H1 (cell line): ENCODE measurements at regions of chr7 and their contacts with region 1.

Region 1: DNA sequence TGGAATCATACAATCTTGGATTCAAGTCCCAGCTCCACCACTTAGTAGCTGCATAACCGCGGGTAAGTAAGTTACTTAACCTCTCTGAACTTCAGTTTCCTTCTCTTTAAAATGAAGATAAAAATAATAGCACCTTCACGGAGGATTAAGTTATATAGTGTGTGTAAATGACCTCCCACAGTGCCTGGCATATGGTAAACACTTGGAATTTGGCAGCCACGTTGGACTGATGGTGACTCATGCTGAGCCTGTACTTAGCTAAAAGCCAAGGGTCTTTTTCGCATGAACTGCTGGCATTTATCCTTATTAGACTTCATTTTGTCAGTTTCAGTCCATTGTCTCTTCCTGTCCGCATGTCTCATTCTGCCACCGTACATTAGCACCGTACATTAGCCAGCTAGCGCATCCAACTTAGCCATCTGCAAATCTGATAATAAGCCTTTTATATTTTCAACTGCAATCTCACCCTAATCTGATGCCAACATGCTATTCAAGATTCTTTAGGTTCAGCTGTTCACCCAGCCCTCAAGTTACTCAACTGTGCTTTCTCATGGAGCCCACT is 11.2 kb downstream of the SLC13A4 start:
- DNase-seq: no peak
- H3K4me3 ChIP-seq: no peak overlapping the region
- H3K27ac ChIP-seq: no peak overlapping the region
- H3K4me1 ChIP-seq: peaks cover 0 to 8% (median under 1%) of the 10 kb centered on the region in 4 experiments; a peak in 2 of 7 replicates
- H3K27me3 ChIP-seq: no peaks in the 10 kb centered on the region
- CTCF ChIP-seq: no peak
- EP300 ChIP-seq: no peak
- POLR2A ChIP-seq: no peak
- RAD21 ChIP-seq: no peak

Region 2: GRCh38 chr7:135616136-135616535 is 100.6 kb before region 1 on chr7:
- CTCF ChIA-PET with region 1: no interaction called
- POLR2A ChIA-PET with region 1: no interaction called
- DNase-seq: no peak
- H3K4me3 ChIP-seq: no peak overlapping the region
- H3K27ac ChIP-seq: no peak overlapping the region
- H3K4me1 ChIP-seq: no peaks in the 10 kb centered on the region
- H3K27me3 ChIP-seq: no peaks in the 10 kb centered on the region
- CTCF ChIP-seq: no peak
- EP300 ChIP-seq: no peak
- POLR2A ChIP-seq: no peak
- RAD21 ChIP-seq: no peak

Region 3: GRCh38 chr7:135650831-135651573 is 65.8 kb before region 1 on chr7:
- CTCF ChIA-PET with region 1: no interaction called
- POLR2A ChIA-PET with region 1: no interaction called
- DNase-seq: no peak
- H3K4me3 ChIP-seq: no peak overlapping the region
- H3K27ac ChIP-seq: no peak overlapping the region
- H3K4me1 ChIP-seq: peaks cover 0 to 2% (median under 1%) of the 10 kb centered on the region in 4 experiments; a peak in 2 of 7 replicates
- H3K27me3 ChIP-seq: no peaks in the 10 kb centered on the region
- CTCF ChIP-seq: no peak
- EP300 ChIP-seq: no peak
- POLR2A ChIP-seq: no peak
- RAD21 ChIP-seq: no peak

Region 4: DNA sequence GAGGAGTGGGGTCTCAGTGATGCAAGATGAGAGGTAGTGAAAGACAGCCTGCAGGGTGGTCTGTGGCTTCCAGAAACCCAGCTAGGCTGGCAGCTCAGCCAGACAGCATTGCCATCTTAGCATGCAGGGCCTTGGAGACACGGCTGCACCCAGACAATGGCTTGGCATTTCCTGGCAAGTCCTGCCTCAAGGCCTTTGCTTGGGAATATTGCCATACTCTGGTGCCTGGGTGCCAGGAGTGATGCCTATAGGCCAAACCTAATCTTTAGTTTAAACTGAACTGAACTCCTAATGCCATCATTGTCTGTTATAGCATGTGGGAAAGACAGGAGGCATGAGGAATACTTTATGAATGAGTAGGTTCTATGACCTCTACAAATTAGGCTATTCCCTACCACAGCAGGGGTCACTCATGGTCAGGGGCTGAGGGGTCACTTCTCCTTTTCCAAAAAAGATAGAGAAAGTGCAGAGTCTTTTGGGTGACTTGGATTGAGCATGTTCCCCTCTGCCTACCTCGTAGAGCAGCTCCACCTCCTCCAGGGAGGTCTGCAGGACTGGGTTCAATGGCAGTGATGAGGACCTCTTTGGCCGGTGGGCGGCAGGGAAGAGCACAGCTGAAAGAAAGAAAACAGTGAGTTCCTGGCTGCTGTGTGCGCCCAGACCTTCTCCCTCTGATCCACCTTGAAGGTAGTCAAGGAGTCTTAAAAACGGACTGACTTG is 20.0 kb after region 1 on chr7:
- CTCF ChIA-PET with region 1: interaction called, 30 read pairs
- POLR2A ChIA-PET with region 1: no interaction called
- DNase-seq: no peak
- H3K4me3 ChIP-seq: no peak overlapping the region
- H3K27ac ChIP-seq: no peak overlapping the region; the same call in 1 of the 2 replicates
- H3K4me1 ChIP-seq: no peaks in the 10 kb centered on the region
- H3K27me3 ChIP-seq: no peaks in the 10 kb centered on the region
- CTCF ChIP-seq: no peak
- EP300 ChIP-seq: no peak
- POLR2A ChIP-seq: no peak
- RAD21 ChIP-seq: no peak